Gastrocnemius medialis (tissue), 4 donors: ENCODE measurements at regions of chrX and their contacts with region 1.

Region 1: GRCh38 chrX:19613645-19614323 is 98.5 kb upstream of the MAP3K15 start:
- DNase-seq: peak; percentile 43 to 64
- ATAC-seq: peak; percentile 76 to 88
- H3K4me3 ChIP-seq: no peak overlapping the region
- H3K27ac ChIP-seq: peak overlapping the region in 2 of 4 donors; percentile 40 to 73
- H3K4me1 ChIP-seq: no peaks in the 10 kb centered on the region
- H3K27me3 ChIP-seq: no peaks in the 10 kb centered on the region
- CTCF ChIP-seq: no peak
- POLR2A ChIP-seq: no peak

Region 2: DNA sequence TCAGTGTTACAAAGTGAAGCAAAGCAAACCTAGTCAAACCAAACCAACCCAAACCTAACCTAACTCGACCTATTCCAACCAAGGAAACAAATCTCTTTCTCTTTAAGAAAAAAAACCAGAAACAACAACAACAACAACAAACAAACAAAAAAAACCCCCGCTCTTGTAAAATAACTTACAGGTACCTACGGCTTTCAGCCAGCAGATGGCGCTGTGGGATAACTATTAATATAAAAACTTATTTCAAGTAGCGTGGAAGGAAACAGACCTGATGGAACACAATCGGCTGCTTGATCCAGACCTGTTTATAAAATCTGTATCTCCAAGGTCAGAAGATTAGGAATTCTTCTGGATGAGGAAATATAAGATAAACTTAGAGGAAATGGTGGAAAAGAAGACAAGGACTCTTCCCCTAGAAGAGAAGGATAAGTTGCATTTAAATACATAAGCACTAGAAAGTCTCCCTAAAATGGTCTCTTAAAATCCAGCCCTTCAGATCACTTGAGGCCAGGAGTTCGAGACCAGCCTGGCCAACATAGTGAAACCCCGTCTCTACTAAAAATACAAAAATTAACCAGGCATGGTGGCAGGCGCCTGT is 1222.7 kb before region 1 on chrX:
- in situ Hi-C with region 1: no loop called
- intact Hi-C with region 1: loop called (anchors 5 kb)
- DNase-seq: peak; percentile 11 to 34
- ATAC-seq: peak; percentile 36 to 45
- H3K4me3 ChIP-seq: no peak overlapping the region
- H3K27ac ChIP-seq: no peak overlapping the region
- H3K4me1 ChIP-seq: no peaks in the 10 kb centered on the region
- H3K27me3 ChIP-seq: no peaks in the 10 kb centered on the region
- CTCF ChIP-seq: peak; percentile 43 to 83 (median 70)
- POLR2A ChIP-seq: no peak

Region 3: DNA sequence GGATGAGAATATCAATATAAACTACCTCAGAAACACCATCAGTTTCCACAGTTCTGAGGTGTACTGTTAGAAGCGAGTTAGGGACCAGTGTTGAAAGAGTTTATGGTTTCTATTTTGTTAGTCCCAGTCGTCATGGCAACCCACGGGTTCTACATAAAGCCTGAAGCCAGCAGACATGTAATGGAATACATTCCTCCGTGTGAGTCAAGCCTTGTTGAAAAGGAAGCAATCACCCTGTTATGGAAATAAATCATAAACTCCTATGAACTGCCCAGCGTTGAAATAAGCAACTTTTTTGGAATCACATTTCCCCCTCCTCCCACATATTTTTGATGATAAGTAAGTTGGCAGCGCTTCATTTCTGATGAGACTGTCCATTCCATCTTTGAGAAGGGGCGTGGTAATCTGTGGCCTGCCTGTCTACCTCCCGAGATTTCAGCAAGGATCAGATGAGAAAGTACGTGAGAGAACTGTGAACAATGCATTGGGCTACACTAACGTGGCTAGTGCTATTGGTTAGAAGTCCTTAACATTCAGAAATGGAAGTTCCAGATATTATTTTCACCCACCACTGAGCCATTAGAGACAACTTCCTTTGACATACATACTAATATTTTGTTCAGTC is 310.4 kb before region 1 on chrX:
- in situ Hi-C with region 1: no loop called
- intact Hi-C with region 1: no loop called
- DNase-seq: peak in 1 of 2 donors; percentile 27
- ATAC-seq: no peak
- H3K4me3 ChIP-seq: no peak overlapping the region
- H3K27ac ChIP-seq: no peak overlapping the region
- H3K4me1 ChIP-seq: no peaks in the 10 kb centered on the region
- H3K27me3 ChIP-seq: no peaks in the 10 kb centered on the region
- CTCF ChIP-seq: no peak
- POLR2A ChIP-seq: no peak

Region 4: DNA sequence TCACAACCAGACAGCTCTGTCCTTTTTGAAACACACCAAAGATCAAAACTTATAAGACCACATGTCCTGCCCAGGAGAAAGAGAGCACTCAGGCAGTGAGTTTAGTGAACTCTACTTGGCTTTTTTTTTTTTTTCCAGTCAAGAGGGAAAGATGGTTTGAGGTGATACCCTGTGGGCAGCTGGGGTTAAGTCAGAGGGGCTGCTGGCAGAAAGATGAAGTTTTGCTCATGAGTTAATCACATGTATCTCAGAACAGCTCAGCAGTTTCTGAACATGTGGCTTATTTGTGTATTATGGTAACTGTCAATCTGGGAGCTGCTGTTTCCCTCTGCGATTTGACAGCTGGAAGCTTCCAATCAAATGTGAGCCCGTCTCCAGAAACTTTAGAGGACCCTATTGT is 42.1 kb before region 1 on chrX:
- in situ Hi-C with region 1: no loop called
- intact Hi-C with region 1: loop called (anchors 5 kb)
- DNase-seq: no peak
- ATAC-seq: no peak
- H3K4me3 ChIP-seq: no peak overlapping the region
- H3K27ac ChIP-seq: no peak overlapping the region
- H3K4me1 ChIP-seq: peaks cover 1 to 5% of the 10 kb centered on the region in 2 donors
- H3K27me3 ChIP-seq: no peaks in the 10 kb centered on the region
- CTCF ChIP-seq: no peak
- POLR2A ChIP-seq: no peak